GM13977 (cell line): ENCODE measurements at regions of chr1 and their contacts with region 1.

Region 1: GRCh38 chr1:112803906-112804762 is 89.0 kb upstream of the PPM1J start:
- DNase-seq: peak; percentile 77
- CTCF ChIP-seq: peak; percentile 94

Region 2: GRCh38 chr1:112371775-112372174 is 432.4 kb before region 1 on chr1:
- in situ Hi-C with region 1: no loop called
- DNase-seq: no peak
- CTCF ChIP-seq: no peak

Region 3: GRCh38 chr1:112688781-112689193 is 115.3 kb before region 1 on chr1:
- in situ Hi-C with region 1: no loop called
- DNase-seq: no peak
- CTCF ChIP-seq: no peak

Region 4: DNA sequence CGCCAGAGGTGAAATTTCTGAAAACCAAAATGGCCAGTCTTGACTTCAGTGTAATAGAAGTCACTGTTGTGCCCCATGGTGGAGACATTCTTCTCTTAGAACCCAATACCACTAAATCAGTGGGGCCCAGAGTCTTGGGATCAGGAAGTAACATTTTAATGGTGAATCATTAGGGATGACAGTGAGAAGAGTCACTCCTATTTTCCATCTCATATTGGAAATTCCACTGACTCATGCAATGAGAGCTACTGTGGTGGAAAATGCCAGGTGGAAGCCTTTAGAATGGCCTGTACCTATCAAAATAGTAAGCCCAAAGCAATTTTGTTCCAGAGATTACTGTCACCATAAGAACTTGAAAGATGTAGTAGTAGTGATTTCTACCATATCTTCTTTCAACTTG is 68.4 kb before region 1 on chr1:
- in situ Hi-C with region 1: loop called (anchors 10 kb)
- DNase-seq: no peak
- CTCF ChIP-seq: no peak

Region 5: DNA sequence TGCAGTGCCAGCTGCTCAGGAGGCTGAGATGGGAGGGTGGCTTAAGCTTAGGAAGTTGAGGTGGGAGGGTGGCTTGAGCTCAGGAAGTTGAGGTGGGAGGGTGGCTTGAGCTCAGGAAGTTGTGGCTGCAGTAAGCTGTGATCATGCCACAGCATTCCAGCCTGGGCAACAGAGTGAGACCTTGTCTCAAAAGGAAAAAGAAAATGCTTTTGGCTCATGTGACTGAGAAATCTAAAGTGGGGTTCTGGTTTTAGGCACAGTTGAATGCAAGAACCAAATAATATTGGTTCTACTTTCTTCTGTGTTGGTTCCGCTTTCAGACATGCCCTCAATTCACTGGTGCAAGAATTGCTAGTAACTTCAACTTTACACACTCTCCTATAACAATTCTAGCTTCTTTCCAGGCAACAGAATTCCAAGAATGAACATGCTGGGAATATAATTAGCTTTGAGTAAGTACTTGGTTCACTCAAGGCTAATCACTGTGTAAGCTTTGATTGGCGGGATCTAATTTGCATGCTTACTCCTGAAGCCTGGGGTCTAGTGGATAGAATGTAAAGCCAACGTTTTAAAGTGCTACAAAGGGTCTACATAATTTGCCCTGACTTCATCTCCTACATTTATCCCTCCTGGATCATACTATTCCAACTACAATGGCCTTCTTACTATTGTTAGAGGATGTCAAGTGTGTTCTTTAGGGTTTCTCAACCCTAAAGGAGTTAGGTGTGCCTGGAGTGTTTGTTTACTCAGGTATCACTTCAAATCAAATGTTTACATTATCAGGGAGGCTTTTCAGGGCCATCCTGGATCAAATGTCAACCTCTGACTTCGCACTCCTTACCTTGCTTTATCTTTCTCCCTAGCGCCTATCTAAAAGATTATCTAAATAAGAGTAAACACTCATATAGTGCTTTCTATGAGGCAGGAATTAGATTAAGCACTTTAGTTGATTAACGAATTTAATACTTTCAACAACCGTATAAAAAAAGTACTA is 36.8 kb after region 1 on chr1:
- in situ Hi-C with region 1: no loop called
- DNase-seq: no peak
- CTCF ChIP-seq: no peak

Region 6: DNA sequence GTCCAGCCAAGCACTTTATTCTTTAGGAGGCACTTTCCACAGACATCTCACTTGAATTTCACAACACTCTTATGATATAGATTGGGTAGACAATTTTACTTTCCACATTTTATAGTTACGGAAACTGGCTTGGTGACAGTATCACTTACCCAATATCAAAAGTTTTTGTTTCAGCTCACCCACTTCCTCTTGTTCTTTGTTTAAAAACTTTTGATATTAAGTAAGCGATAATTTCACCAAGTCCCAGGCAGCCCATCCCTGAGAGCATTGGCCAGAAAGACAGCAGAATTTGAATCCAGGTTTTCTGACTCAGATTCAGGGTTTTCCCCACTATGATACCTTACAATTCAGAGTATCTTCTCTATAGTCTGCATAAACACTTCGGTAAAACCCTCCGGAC is 328.9 kb after region 1 on chr1:
- in situ Hi-C with region 1: no loop called
- DNase-seq: no peak
- CTCF ChIP-seq: no peak